ENCODE measurements at regions of chr9 and their contacts with region 1.

Region 1: GRCh38 chr9:97598461-97599288 is 34.5 kb downstream of the TSTD2 start:
- DNase-seq: peak; percentile 77
- H3K4me3 Mint-ChIP-seq: no peak overlapping the region
- H3K27ac Mint-ChIP-seq: no peak overlapping the region
- H3K4me1 Mint-ChIP-seq: peaks cover 7% of the 10 kb centered on the region
- H3K27me3 Mint-ChIP-seq: no peaks in the 10 kb centered on the region

Region 2: DNA sequence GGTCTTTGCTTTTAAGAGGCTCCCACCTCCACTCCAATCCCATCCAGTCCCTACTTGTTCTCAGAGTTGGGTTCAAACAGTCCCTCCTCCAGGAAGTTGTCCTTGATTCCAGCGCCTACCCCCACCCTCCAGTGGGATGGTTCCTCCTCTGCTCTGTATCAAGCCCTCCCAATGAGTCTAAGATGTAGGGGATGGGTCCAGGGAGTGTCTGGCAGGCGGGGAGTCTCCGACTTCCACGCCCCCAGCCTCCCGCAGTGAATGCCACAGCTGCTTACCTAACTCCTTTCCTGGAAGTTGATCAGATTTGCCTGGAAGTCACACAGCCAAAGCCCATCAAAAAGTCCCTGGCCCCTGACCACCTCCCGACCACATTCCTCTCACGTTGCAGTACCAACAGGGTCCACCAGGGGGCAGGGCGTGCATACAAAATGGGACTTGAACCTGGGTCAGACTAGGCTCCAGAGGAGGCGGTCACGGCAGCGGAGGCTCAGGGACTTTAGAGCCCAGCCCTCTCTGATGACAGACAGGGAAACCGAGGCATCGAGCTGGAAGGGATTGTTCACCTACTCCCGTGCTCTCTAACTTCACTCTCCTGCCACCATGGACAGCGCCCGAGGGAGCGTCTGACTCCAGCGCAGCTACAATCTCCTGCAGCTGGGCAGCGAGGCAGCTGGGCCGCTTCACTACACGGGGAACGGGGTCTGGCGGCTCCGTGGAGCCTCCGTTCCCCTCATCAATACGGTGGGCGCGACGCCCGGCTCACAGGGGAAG is 211.8 kb before region 1 on chr9:
- CTCF ChIA-PET with region 1: interaction called, 31 read pairs
- POLR2A ChIA-PET with region 1: no interaction called
- DNase-seq: peak; percentile 76
- H3K4me3 Mint-ChIP-seq: no peak overlapping the region
- H3K27ac Mint-ChIP-seq: no peak overlapping the region
- H3K4me1 Mint-ChIP-seq: peaks cover 24% of the 10 kb centered on the region
- H3K27me3 Mint-ChIP-seq: peaks cover 31% of the 10 kb centered on the region

Region 3: GRCh38 chr9:97462914-97463313 is 135.8 kb before region 1 on chr9:
- CTCF ChIA-PET with region 1: interaction called, 89 read pairs
- POLR2A ChIA-PET with region 1: interaction called, 3 read pairs
- DNase-seq: no peak
- H3K4me3 Mint-ChIP-seq: no peak overlapping the region
- H3K27ac Mint-ChIP-seq: no peak overlapping the region
- H3K4me1 Mint-ChIP-seq: no peaks in the 10 kb centered on the region
- H3K27me3 Mint-ChIP-seq: no peaks in the 10 kb centered on the region

Region 4: GRCh38 chr9:97501177-97501971 is 97.3 kb before region 1 on chr9 and contains the start of gene TMOD1:
- CTCF ChIA-PET with region 1: interaction called, 25 read pairs
- POLR2A ChIA-PET with region 1: no interaction called
- DNase-seq: peak; percentile 56
- H3K4me3 Mint-ChIP-seq: peak within 1 kb of the TSS; percentile 65
- H3K27ac Mint-ChIP-seq: no peak within 1 kb of the TSS
- H3K4me1 Mint-ChIP-seq: peaks cover 17% of the 10 kb centered on the region
- H3K27me3 Mint-ChIP-seq: peaks cover 47% of the 10 kb centered on the region
- total RNA-seq, gene TMOD1: 1.5 to 1.8 TPM

Region 5: GRCh38 chr9:97615439-97616072 is 16.9 kb after region 1 on chr9:
- CTCF ChIA-PET with region 1: interaction called, 40 read pairs
- POLR2A ChIA-PET with region 1: interaction called, 3 read pairs
- DNase-seq: peak; percentile 61
- H3K4me3 Mint-ChIP-seq: no peak overlapping the region
- H3K27ac Mint-ChIP-seq: no peak overlapping the region
- H3K4me1 Mint-ChIP-seq: peaks cover 18% of the 10 kb centered on the region
- H3K27me3 Mint-ChIP-seq: no peaks in the 10 kb centered on the region

Region 6: DNA sequence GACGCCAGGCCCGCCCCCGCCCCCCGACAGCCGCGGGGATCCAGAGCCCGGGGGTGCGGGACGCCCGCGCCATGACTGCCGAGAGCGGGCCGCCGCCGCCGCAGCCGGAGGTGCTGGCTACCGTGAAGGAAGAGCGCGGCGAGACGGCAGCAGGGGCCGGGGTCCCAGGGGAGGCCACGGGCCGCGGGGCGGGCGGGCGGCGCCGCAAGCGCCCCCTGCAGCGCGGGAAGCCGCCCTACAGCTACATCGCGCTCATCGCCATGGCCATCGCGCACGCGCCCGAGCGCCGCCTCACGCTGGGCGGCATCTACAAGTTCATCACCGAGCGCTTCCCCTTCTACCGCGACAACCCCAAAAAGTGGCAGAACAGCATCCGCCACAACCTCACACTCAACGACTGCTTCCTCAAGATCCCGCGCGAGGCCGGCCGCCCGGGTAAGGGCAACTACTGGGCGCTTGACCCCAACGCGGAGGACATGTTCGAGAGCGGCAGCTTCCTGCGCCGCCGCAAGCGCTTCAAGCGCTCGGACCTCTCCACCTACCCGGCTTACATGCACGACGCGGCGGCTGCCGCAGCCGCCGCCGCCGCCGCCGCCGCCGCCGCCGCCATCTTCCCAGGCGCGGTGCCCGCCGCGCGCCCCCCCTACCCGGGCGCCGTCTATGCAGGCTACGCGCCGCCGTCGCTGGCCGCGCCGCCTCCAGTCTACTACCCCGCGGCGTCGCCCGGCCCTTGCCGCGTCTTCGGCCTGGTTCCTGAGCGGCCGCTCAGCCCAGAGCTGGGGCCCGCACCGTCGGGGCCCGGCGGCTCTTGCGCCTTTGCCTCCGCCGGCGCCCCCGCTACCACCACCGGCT is 255.4 kb after region 1 on chr9:
- CTCF ChIA-PET with region 1: no interaction called
- POLR2A ChIA-PET with region 1: no interaction called
- DNase-seq: peak; percentile 71
- H3K4me3 Mint-ChIP-seq: peak overlapping the region; percentile 72
- H3K27ac Mint-ChIP-seq: peak overlapping the region; percentile 5
- H3K4me1 Mint-ChIP-seq: peaks cover 27% of the 10 kb centered on the region
- H3K27me3 Mint-ChIP-seq: peaks cover 81% of the 10 kb centered on the region

Region 7: GRCh38 chr9:98306384-98307160 is 707.9 kb after region 1 on chr9:
- CTCF ChIA-PET with region 1: no interaction called
- POLR2A ChIA-PET with region 1: no interaction called
- DNase-seq: no peak
- H3K4me3 Mint-ChIP-seq: no peak overlapping the region
- H3K27ac Mint-ChIP-seq: no peak overlapping the region
- H3K4me1 Mint-ChIP-seq: peaks cover under 1% of the 10 kb centered on the region
- H3K27me3 Mint-ChIP-seq: peaks cover 3% of the 10 kb centered on the region